CD8-positive, alpha-beta T cell (primary cell): ENCODE measurements at regions of chr11 and their contacts with region 1.

Region 1: GRCh38 chr11:126211235-126212088 is at the starts of genes FAM118B and RPUSD4:
- DNase-seq: peak; percentile 98 to 99 (median 98)
- ATAC-seq: peak; percentile 95
- H3K4me3 ChIP-seq: peak within 1 kb of the TSS; percentile 95 to 98
- H3K4me3 Mint-ChIP-seq: peak within 1 kb of the TSS; percentile 99
- H3K27ac ChIP-seq: peak within 1 kb of the TSS; percentile 71 to 80
- H3K27ac Mint-ChIP-seq: peak within 1 kb of the TSS; percentile 95
- H3K4me1 ChIP-seq: peaks cover 18% of the 10 kb centered on the region
- H3K4me1 Mint-ChIP-seq: peaks cover 40% of the 10 kb centered on the region
- H3K27me3 ChIP-seq: no peaks in the 10 kb centered on the region
- H3K27me3 Mint-ChIP-seq: no peaks in the 10 kb centered on the region
- CTCF ChIP-seq: no peak
- total RNA-seq, gene FAM118B: 0.64 to 0.79 TPM
- total RNA-seq, gene RPUSD4: 42.3 to 43.8 TPM

Region 2: GRCh38 chr11:124622531-124623451 is 1588.7 kb before region 1 on chr11 and contains the start of gene TBRG1:
- CTCF ChIA-PET with region 1: no interaction called
- POLR2A ChIA-PET with region 1: no interaction called
- intact Hi-C with region 1: loop called (anchors 5 kb)
- DNase-seq: peak; percentile 62 to 95 (median 84)
- ATAC-seq: peak; percentile 97
- H3K4me3 ChIP-seq: peak within 1 kb of the TSS; percentile 94 to 100
- H3K4me3 Mint-ChIP-seq: peak within 1 kb of the TSS; percentile 97
- H3K27ac ChIP-seq: peak within 1 kb of the TSS; percentile 95 to 97
- H3K27ac Mint-ChIP-seq: peak within 1 kb of the TSS; percentile 99
- H3K4me1 ChIP-seq: peaks cover 16% of the 10 kb centered on the region
- H3K4me1 Mint-ChIP-seq: peaks cover 43% of the 10 kb centered on the region
- H3K27me3 ChIP-seq: no peaks in the 10 kb centered on the region
- H3K27me3 Mint-ChIP-seq: peaks cover 6% of the 10 kb centered on the region
- CTCF ChIP-seq: no peak
- total RNA-seq, gene TBRG1: 59.2 to 61.0 TPM

Region 3: DNA sequence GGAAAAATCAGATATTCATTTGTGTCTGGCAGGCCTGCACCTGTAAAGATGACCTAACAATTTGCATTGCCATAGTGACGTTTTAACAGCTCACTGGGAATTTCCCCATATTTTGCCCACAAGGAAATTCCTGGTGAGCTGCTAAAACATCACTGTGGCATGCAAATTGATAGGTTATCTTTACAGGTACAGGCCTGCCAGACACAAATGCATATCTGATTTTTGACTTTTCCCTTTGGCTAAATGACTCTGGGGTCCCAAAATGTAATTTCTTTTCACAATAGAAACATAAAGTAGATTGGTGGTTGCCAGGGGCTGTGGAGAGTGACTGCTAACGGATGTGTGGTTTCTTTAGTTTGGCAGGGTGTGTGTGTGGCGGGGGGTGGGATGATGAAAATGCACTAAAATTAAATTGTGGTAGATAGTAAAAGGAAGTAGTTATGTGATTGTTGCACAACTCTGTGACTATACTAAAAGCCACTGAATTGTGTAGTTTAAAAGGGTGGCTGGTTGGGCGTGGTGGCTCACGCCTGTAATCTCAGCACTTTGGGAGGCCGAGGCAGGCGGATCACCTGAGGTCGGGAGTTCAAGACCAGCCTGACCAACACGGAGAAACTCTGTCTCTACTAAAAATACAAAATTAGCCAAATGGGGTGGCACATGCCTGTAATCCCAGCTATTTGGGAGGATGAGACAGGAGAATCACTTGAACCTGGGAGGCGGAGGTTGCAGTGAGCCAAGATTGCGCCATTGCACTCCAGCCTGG is 696.9 kb before region 1 on chr11:
- CTCF ChIA-PET with region 1: no interaction called
- POLR2A ChIA-PET with region 1: no interaction called
- intact Hi-C with region 1: no loop called
- DNase-seq: peak; percentile 27 to 95 (median 53)
- ATAC-seq: peak; percentile 84
- H3K4me3 ChIP-seq: no peak overlapping the region
- H3K4me3 Mint-ChIP-seq: peak overlapping the region; percentile 30
- H3K27ac ChIP-seq: peak overlapping the region; percentile 52 to 88
- H3K27ac Mint-ChIP-seq: peak overlapping the region; percentile 89
- H3K4me1 ChIP-seq: peaks cover 35% of the 10 kb centered on the region
- H3K4me1 Mint-ChIP-seq: peaks cover 37% of the 10 kb centered on the region
- H3K27me3 ChIP-seq: no peaks in the 10 kb centered on the region
- H3K27me3 Mint-ChIP-seq: no peaks in the 10 kb centered on the region
- CTCF ChIP-seq: no peak

Region 4: DNA sequence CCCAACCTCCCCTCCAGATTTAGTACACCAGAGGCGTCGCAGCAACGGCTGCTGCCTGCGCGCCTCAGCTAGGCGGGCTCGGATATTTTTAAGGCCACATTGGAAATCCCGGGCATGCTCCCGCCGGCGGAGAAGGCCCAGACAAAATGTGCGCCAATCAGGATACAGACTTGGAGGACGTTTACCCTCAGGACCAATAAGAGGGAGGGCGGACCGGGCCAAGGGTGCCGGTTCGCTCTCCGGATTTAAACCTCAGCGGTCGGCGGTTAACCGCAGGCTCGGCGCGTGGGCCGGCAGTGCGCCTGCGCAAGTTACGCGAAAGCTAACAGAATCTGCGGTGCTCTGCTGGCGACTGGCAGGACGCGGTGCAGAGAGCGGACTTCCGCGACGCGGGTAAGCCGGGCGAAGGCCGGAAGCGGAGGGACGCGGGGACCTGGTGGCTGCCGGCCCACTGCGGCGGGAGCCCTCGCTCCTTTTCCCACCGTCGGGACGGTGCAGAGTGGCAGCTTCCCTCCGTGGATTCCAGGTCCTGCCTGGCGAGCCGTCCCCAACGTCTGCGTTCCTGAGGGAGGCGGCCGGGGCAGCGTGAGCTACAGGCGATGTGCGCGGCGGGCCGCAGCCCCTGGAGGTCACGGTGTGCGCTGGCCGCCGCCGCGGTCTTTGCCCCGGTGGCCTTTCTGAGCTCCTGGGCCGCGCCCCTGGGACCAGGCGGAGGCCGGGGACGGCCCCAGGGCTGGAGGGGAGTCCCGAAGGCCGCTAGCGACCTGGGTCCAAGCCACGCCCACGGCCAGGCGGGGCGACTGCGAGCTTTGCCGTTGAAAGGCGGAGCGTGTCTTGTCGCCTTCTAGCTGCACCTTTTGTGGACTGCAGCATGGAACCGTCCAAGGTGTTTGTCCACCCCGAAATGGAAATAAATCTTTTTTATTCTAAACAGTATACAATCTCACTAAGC is 323.8 kb before region 1 on chr11 and contains the start of gene HYLS1:
- CTCF ChIA-PET with region 1: no interaction called
- POLR2A ChIA-PET with region 1: no interaction called
- intact Hi-C with region 1: loop called in 1 of 2 experiments (anchors 1 kb)
- DNase-seq: peak; percentile 87 to 97 (median 94)
- ATAC-seq: peak; percentile 88
- H3K4me3 ChIP-seq: peak within 1 kb of the TSS; percentile 81 to 84
- H3K4me3 Mint-ChIP-seq: peak within 1 kb of the TSS; percentile 88
- H3K27ac ChIP-seq: peak within 1 kb of the TSS; percentile 61 to 87
- H3K27ac Mint-ChIP-seq: peak within 1 kb of the TSS; percentile 87
- H3K4me1 ChIP-seq: peaks cover 10% of the 10 kb centered on the region
- H3K4me1 Mint-ChIP-seq: peaks cover 31% of the 10 kb centered on the region
- H3K27me3 ChIP-seq: no peaks in the 10 kb centered on the region
- H3K27me3 Mint-ChIP-seq: no peaks in the 10 kb centered on the region
- CTCF ChIP-seq: no peak
- total RNA-seq, gene HYLS1: 1.1 to 1.2 TPM

Region 5: GRCh38 chr11:126062679-126063506 is 148.6 kb before region 1 on chr11 and contains the start of gene CDON:
- CTCF ChIA-PET with region 1: no interaction called
- POLR2A ChIA-PET with region 1: no interaction called
- intact Hi-C with region 1: loop called (anchors 1 to 2 kb)
- DNase-seq: peak; percentile 78 to 95 (median 89)
- ATAC-seq: peak; percentile 89
- H3K4me3 ChIP-seq: peak within 1 kb of the TSS; percentile 60 to 91
- H3K4me3 Mint-ChIP-seq: peak within 1 kb of the TSS; percentile 91
- H3K27ac ChIP-seq: peak within 1 kb of the TSS; percentile 80 to 90
- H3K27ac Mint-ChIP-seq: peak within 1 kb of the TSS; percentile 95
- H3K4me1 ChIP-seq: peaks cover 13% of the 10 kb centered on the region
- H3K4me1 Mint-ChIP-seq: peaks cover 13% of the 10 kb centered on the region
- H3K27me3 ChIP-seq: no peaks in the 10 kb centered on the region
- H3K27me3 Mint-ChIP-seq: peaks cover 4% of the 10 kb centered on the region
- CTCF ChIP-seq: no peak
- total RNA-seq, gene CDON: 1.00 to 1.1 TPM

Region 6: GRCh38 chr11:126132319-126132718 is 79.1 kb before region 1 on chr11:
- CTCF ChIA-PET with region 1: no interaction called
- POLR2A ChIA-PET with region 1: no interaction called
- intact Hi-C with region 1: no loop called
- DNase-seq: no peak
- ATAC-seq: no peak
- H3K4me3 ChIP-seq: no peak overlapping the region
- H3K4me3 Mint-ChIP-seq: no peak overlapping the region
- H3K27ac ChIP-seq: no peak overlapping the region
- H3K27ac Mint-ChIP-seq: no peak overlapping the region
- H3K4me1 ChIP-seq: no peaks in the 10 kb centered on the region
- H3K4me1 Mint-ChIP-seq: no peaks in the 10 kb centered on the region
- H3K27me3 ChIP-seq: no peaks in the 10 kb centered on the region
- H3K27me3 Mint-ChIP-seq: no peaks in the 10 kb centered on the region
- CTCF ChIP-seq: no peak

Region 7: DNA sequence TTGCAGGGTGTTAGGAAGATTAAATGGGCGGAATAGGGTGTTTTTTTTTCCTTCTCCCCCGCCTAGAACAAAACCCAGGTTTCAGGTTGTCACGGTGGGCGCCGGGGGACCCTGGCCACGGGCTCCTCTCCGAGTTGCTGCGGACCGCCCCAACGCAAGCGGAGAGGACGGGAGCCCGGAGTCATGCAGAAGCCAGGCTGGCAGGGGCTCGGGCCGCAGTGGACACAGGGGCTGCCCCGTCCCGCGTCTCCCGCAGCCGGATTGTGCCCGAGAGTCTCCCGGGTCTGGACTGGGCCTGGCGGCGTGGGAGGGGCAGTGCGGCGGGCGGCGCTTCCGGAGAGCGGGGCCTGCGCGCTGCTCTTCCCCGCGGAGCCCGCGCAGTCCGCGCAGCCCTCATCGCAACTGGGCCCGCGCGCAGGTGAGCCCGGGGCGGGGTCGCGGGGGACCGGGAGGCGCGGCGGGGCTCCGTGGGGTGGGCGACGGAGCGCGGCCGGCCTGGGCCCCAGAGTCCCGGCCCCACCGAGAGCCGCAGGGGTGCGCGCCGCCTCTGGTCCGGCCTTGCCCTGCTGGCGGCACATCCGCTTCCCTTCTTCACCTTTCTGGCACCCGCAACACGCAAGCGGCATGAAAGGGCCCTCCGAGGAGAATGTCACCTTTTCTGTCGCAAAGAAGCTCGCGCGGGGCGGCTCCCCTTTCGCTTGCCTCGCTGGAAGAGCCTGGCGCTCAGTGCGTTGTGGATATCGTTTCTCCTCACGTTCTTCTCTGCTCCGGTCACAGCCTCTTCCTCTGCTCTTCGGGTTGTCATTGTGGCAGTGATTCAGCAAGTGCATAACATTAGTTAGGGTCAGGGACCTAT is 71.5 kb after region 1 on chr11 and contains the start of gene TIRAP:
- CTCF ChIA-PET with region 1: no interaction called
- POLR2A ChIA-PET with region 1: interaction called, 4 read pairs
- intact Hi-C with region 1: loop called (anchors 5 kb)
- DNase-seq: peak; percentile 28 to 83 (median 65)
- ATAC-seq: peak; percentile 60
- H3K4me3 ChIP-seq: peak within 1 kb of the TSS; percentile 88 to 99
- H3K4me3 Mint-ChIP-seq: peak within 1 kb of the TSS; percentile 88
- H3K27ac ChIP-seq: peak within 1 kb of the TSS; percentile 78 to 87
- H3K27ac Mint-ChIP-seq: peak within 1 kb of the TSS; percentile 98
- H3K4me1 ChIP-seq: peaks cover 34% of the 10 kb centered on the region
- H3K4me1 Mint-ChIP-seq: peaks cover 48% of the 10 kb centered on the region
- H3K27me3 ChIP-seq: no peaks in the 10 kb centered on the region
- H3K27me3 Mint-ChIP-seq: no peaks in the 10 kb centered on the region
- CTCF ChIP-seq: no peak
- total RNA-seq, gene TIRAP: 6.7 to 7.9 TPM

Region 8: DNA sequence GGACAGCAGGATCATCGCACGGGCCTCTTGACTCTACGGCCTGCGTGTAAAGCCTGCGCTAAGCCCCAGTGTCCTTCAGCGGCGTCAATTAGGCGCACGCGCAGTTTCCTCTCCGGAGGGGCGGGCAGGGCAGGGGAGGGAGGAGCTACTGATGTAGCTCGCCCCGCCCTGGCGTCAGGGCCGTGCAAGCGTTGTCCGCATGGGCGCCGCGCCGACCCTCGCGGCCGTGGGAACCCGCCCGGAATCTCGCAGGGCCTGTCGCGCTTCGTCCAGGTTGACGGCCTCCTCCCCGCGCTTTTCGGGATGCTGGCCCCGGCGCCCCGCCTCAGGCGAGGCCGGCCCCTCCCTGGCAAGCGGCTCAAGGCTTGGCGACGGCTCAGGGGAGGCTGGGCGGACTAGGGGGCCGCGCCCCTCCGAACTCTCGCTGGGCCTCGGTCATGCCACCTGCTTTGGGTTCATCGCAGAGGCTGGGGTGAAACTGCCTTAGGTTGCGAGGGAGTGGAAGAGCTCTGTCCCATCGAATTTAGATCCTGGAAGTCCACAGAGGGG is 205.2 kb after region 1 on chr11:
- CTCF ChIA-PET with region 1: no interaction called
- POLR2A ChIA-PET with region 1: no interaction called
- intact Hi-C with region 1: loop called in 1 of 2 experiments (anchors 2 kb)
- DNase-seq: peak; percentile 20 to 82 (median 67)
- ATAC-seq: peak; percentile 98
- H3K4me3 ChIP-seq: peak overlapping the region; percentile 40 to 49
- H3K4me3 Mint-ChIP-seq: peak overlapping the region; percentile 71
- H3K27ac ChIP-seq: no peak overlapping the region
- H3K27ac Mint-ChIP-seq: no peak overlapping the region
- H3K4me1 ChIP-seq: peaks cover 7% of the 10 kb centered on the region
- H3K4me1 Mint-ChIP-seq: peaks cover 12% of the 10 kb centered on the region
- H3K27me3 ChIP-seq: no peaks in the 10 kb centered on the region
- H3K27me3 Mint-ChIP-seq: peaks cover 2% of the 10 kb centered on the region
- CTCF ChIP-seq: no peak